ENCODE measurements at regions of chr1 and their contacts with region 1.

Region 1: GRCh38 chr1:111481387-111482221 is 7.8 kb downstream of the C1orf162 start:
- DNase-seq: peak; percentile 86

Region 2: DNA sequence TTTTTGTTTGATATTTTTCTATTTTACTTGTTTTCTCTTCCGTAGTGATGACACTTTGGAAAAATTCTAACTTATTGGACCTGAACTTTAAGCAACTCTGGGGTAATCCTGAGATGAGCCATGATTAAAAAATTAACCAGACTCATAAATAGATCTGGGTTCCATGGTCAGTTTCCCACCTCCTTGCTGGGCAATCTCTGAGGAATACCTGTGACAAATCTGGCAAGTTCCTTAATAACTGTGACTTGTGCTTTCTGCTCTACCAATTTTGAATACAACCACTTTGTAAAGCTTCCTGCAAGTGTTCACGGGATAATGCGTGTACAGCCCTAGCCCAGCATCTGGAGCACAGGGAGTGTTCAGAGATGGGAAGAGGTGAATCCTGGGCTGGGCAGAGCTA is 57.3 kb before region 1 on chr1:
- CTCF ChIA-PET with region 1: no interaction called
- POLR2A ChIA-PET with region 1: no interaction called
- DNase-seq: no peak

Region 3: DNA sequence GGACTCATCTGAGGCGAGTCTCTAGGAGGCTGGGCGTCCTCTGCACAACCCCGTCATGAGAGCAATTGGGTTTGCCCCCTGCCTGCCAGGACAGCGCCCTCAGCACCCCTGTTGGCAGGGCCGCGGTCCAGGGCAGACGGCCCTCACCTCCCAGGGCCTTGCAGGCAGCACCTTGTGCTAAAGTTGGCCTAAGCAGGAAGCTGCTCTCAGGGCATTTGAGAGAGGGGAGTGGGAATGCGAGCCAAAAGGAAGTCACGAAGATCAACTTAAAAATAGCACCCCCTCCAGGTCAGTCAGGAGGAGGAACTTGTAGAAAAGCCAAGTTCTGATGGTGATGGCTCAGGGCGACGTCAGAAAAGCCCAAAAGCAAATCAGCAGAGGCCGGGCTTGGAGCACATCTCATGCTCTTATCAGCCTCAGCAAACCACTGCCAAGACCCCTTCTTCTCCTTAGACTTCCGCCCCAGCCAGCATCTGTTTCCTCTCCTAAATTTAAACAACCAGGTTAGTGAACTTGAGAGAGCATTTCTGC is 34.5 kb after region 1 on chr1:
- CTCF ChIA-PET with region 1: no interaction called
- POLR2A ChIA-PET with region 1: no interaction called
- DNase-seq: peak; percentile 36

Region 4: GRCh38 chr1:111553196-111553595 is 71.6 kb after region 1 on chr1:
- CTCF ChIA-PET with region 1: no interaction called
- POLR2A ChIA-PET with region 1: no interaction called
- DNase-seq: no peak

Region 5: GRCh38 chr1:111658622-111659021 is 177.0 kb after region 1 on chr1:
- CTCF ChIA-PET with region 1: interaction called, 11 read pairs
- POLR2A ChIA-PET with region 1: no interaction called
- DNase-seq: no peak